Ascending aorta (tissue), 2 donors: ENCODE measurements at regions of chr19 and their contacts with region 1.

Region 1: GRCh38 chr19:8363803-8364771 is at the start of gene ANGPTL4:
- DNase-seq: peak in 1 of 2 donors; percentile 86
- H3K4me3 ChIP-seq: peak within 1 kb of the TSS; percentile 70 to 78
- H3K27ac ChIP-seq: peak within 1 kb of the TSS; percentile 92 to 94
- H3K4me1 ChIP-seq: peaks cover 20 to 38% of the 10 kb centered on the region in 2 donors
- H3K27me3 ChIP-seq: no peaks in the 10 kb centered on the region
- CTCF ChIP-seq: peak in 1 of 3 experiments; percentile 22
- total RNA-seq, gene ANGPTL4: 161 TPM

Region 2: GRCh38 chr19:8389891-8390616 is 26.0 kb after region 1 on chr19 and contains the start of gene RAB11B:
- intact Hi-C with region 1: loop called (anchors 1 kb)
- DNase-seq: peak; percentile 100
- H3K4me3 ChIP-seq: peak within 1 kb of the TSS; percentile 97 to 100
- H3K27ac ChIP-seq: peak within 1 kb of the TSS; percentile 100
- H3K4me1 ChIP-seq: peaks cover 18 to 42% of the 10 kb centered on the region in 2 donors
- H3K27me3 ChIP-seq: no peaks in the 10 kb centered on the region
- CTCF ChIP-seq: no peak
- total RNA-seq, gene RAB11B: 70.8 TPM

Region 3: GRCh38 chr19:8513687-8514504 is 149.8 kb after region 1 on chr19 and contains the start of gene ZNF414:
- intact Hi-C with region 1: no loop called
- DNase-seq: peak; percentile 77 to 98
- H3K4me3 ChIP-seq: peak within 1 kb of the TSS; percentile 70 to 90
- H3K27ac ChIP-seq: peak within 1 kb of the TSS; percentile 96 to 98
- H3K4me1 ChIP-seq: peaks cover 6 to 7% of the 10 kb centered on the region in 2 donors
- H3K27me3 ChIP-seq: no peaks in the 10 kb centered on the region
- CTCF ChIP-seq: no peak
- total RNA-seq, gene ZNF414: 189 TPM

Region 4: GRCh38 chr19:8638078-8638619 is 274.1 kb after region 1 on chr19:
- intact Hi-C with region 1: no loop called
- DNase-seq: peak in 1 of 2 donors; percentile 72
- H3K4me3 ChIP-seq: no peak overlapping the region
- H3K27ac ChIP-seq: no peak overlapping the region
- H3K4me1 ChIP-seq: peaks cover 0 to 10% of the 10 kb centered on the region in 2 donors
- H3K27me3 ChIP-seq: no peaks in the 10 kb centered on the region
- CTCF ChIP-seq: no peak